AG04450 (cell line): ENCODE measurements at regions of chr3 and their contacts with region 1.

Region 1: GRCh38 chr3:186821429-186822367 is 15.4 kb upstream of the RFC4 start:
- DNase-seq: no peak
- H3K4me3 ChIP-seq: peak overlapping the region; percentile 47
- H3K27ac ChIP-seq: peak overlapping the region; percentile 87
- H3K27me3 ChIP-seq: no peaks in the 10 kb centered on the region
- CTCF ChIP-seq: peak; percentile 73

Region 2: DNA sequence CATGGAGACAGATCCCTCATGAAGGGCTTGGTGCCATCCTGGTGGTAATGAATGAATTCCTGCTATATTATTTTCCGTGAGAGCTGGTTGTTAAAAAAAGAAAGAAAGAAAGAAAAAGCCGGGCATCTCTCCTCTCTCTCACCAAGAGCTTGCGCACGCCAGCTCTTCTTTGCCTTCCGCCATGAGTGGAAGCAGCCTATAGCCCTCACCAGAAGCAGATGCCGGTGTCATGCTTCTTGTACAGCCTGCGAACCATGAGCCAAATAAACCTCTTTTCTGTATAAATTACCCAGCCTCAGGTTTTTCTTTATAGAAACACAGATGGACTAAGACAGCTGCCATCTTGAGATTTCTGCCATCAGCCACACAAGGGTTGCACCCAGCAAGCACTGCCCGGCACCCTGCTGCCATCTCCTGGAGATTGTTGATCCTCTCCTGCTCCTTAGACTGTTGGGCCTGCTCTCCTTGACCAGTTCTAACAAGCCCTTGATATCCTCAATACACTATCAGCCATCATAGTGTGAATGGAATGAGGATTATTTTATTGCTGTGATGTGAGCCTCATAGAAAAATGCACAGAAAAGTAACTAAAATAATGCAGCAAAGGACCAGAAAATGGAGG is 212.3 kb before region 1 on chr3:
- CTCF ChIA-PET with region 1: interaction called, 186 read pairs
- POLR2A ChIA-PET with region 1: no interaction called
- DNase-seq: no peak
- H3K4me3 ChIP-seq: no peak overlapping the region
- H3K27ac ChIP-seq: no peak overlapping the region
- H3K27me3 ChIP-seq: peaks cover 16% of the 10 kb centered on the region
- CTCF ChIP-seq: peak; percentile 22; the same call in 1 of the 2 replicates

Region 3: GRCh38 chr3:186790261-186790981 is 31.3 kb before region 1 on chr3:
- CTCF ChIA-PET with region 1: interaction called, 8 read pairs
- POLR2A ChIA-PET with region 1: interaction called, 10 read pairs
- DNase-seq: no peak
- H3K4me3 ChIP-seq: no peak overlapping the region
- H3K27ac ChIP-seq: no peak overlapping the region
- H3K27me3 ChIP-seq: no peaks in the 10 kb centered on the region
- CTCF ChIP-seq: no peak

Region 4: DNA sequence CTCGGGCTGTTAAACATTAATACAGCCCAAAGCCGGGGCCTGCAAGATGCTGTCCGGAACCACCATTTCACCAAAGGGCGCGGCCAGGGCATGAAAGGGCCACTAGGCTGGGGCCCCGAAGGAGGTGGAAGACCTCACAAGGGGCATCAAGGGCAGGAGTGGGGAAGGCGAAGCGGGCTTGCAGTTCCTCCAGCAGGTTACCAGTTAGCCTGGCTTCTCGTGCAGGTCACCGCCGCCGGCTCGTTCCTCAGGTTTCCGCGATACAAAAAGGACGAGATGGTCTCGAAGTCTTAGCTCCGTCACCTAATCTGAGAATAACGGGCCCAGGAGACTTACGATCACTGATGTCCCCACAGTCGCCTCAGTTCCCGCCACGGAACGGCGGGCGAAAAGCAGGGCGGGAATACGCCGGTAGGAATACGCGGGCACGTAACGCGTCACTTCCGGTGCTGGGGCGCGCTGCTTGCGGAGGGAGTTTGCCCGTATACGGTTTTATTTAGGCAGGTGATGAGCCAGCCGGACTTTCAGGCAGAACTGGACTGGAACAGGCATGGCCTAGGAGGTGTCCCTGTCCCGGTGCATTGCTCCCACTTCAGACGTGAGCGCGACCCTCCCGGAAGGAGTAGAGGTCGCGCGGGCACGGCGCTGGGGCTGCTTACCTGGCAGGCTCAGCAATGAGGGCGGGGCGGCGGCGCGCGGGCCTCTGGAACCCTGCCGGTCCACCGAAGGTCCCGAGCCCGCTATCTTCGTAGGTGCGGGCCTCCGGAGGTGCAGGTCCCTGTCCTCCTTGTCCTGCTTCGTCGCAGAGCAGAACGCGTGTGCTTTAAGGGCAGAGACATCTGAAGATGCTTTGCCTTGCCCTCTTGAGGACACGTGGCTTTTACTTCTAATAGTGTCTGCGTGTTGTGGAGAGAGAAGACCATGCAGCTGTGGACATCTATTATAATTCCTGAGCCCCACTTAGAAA is 15.3 kb before region 1 on chr3 and contains the start of gene RFC4:
- CTCF ChIA-PET with region 1: interaction called, 22 read pairs
- POLR2A ChIA-PET with region 1: no interaction called
- DNase-seq: no peak
- H3K4me3 ChIP-seq: peak within 1 kb of the TSS; percentile 88
- H3K27ac ChIP-seq: peak within 1 kb of the TSS; percentile 73
- H3K27me3 ChIP-seq: no peaks in the 10 kb centered on the region
- CTCF ChIP-seq: no peak
- polyA plus RNA-seq, gene RFC4: 7.3 and 9.4 TPM in 2 replicates